PC-3 (cell line): ENCODE measurements at regions of chr10 and their contacts with region 1.

Region 1: DNA sequence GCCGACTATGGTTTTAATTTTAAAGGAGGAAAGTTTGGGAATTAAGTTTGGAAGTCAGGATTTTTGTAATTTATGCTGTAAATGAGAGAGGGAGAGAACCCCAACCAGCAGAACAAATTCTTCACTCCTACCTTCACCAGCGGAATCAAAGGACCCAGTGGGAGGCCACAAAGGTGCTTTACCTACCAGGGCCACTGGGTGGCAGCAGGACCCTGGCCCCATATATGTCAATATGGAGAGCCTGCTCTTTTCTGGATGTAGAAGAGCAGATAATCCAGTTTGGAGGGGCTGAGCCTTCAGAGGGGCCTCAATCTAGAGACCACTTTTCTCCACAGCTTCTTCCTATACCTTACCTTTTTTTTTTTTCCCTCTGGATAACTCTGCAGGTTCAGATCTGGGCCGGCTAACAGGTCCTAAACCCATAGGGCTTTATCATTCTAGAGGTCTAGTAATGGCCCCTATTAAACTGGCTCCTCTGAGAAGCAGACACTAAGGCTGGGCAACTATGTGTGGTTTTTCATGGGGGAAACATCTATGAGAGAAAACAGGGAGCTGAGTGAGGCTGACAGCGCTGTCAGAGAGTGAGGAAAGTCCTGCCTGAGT is 8.5 kb upstream of the SCD start:
- DNase-seq: peak; percentile 70
- ATAC-seq: peak; percentile 51
- H3K4me3 ChIP-seq: no peak overlapping the region
- H3K27ac ChIP-seq: no peak overlapping the region
- H3K4me1 ChIP-seq: no peaks in the 10 kb centered on the region
- H3K27me3 ChIP-seq: 0 out of 2 replicates have a peak, but pooled peaks cover 5% of the 10 kb centered on the region
- CTCF ChIP-seq: peak; percentile 79

Region 2: DNA sequence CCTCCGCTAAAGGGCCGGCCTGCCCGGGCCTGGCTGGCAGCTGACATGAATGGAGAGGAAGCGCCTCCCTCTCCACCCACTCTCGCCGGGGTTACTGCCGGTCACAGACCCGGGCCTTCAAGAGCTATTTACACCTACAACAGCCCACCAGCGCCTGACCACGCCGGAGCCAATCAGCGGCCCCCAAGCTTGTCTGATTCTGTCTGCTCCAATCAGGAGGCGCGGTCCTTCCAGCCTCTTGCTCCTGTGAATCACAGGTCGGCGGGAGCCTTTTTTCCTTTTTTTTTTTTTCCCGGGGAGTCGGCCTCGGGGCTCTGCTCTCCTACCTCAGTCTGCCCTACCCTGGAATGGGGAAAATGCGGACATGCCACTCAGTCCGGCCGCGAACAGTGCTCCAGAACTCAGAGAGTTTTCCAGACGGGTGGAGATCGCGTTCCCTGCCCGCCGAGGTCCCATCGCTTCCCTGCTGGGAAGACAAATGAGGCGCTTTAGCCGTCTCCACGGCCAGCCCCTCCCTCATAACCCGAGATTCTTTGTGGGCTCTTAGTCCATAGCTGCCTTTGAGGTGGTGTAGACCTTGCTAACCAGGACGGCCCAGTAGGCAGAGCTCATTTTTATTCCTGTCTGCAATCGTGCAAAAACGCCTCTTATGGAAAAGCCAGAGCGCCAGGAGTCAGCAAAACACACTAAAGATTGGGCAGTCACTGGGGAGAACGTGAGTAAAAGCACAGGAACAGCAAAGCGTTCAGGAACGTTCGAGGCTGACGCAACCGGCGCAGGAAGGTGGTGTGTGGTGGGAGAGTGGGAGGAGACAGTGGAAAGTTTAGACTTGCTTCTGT is 35.0 kb after region 1 on chr10:
- CTCF ChIA-PET with region 1: interaction called, 5 read pairs
- POLR2A ChIA-PET with region 1: interaction called, 16 read pairs
- intact Hi-C with region 1: loop called (anchors 1 kb)
- DNase-seq: peak; percentile 94
- ATAC-seq: peak; percentile 76
- H3K4me3 ChIP-seq: peak overlapping the region; percentile 92
- H3K27ac ChIP-seq: peak overlapping the region; percentile 100
- H3K4me1 ChIP-seq: peaks cover 37% of the 10 kb centered on the region
- H3K27me3 ChIP-seq: no peaks in the 10 kb centered on the region
- CTCF ChIP-seq: no peak

Region 3: GRCh38 chr10:100433253-100434240 is 95.0 kb after region 1 on chr10:
- CTCF ChIA-PET with region 1: interaction called, 5 read pairs
- POLR2A ChIA-PET with region 1: no interaction called
- intact Hi-C with region 1: loop called (anchors 1 kb)
- DNase-seq: peak; percentile 98
- ATAC-seq: peak; percentile 86
- H3K4me3 ChIP-seq: no peak overlapping the region
- H3K27ac ChIP-seq: no peak overlapping the region
- H3K4me1 ChIP-seq: peaks cover 4% of the 10 kb centered on the region; the same call in 1 of the 2 replicates
- H3K27me3 ChIP-seq: no peaks in the 10 kb centered on the region
- CTCF ChIP-seq: peak; percentile 99

Region 4: DNA sequence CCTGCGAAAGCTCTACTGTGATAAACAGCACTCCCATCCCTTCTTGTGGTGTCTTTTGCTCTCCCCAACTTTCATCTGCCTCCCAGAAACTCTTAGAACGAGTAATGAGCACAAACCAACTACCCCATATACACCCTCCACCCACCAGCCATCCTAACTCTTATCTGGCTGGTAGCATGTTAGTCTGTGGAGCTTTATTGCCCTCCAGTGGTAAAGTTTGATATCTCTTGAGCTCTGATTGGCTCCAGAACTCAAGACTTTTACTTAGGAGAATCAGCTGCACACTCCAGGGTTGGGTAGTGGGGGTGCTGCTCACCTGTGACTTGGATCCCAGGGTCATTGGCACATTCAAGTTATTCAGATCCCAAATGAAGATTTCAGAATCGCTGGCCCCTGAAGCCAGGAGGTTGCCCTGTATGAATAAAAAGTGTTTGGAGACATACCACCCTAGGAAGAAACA is 170.2 kb after region 1 on chr10:
- CTCF ChIA-PET with region 1: no interaction called
- POLR2A ChIA-PET with region 1: no interaction called
- intact Hi-C with region 1: loop called (anchors 2 kb)
- DNase-seq: peak; percentile 67
- ATAC-seq: peak; percentile 79
- H3K4me3 ChIP-seq: no peak overlapping the region
- H3K27ac ChIP-seq: no peak overlapping the region
- H3K4me1 ChIP-seq: peaks cover 5% of the 10 kb centered on the region; the same call in 1 of the 2 replicates
- H3K27me3 ChIP-seq: no peaks in the 10 kb centered on the region
- CTCF ChIP-seq: peak; percentile 68